ENCODE measurements at regions of chr9 and their contacts with region 1.

Region 1: DNA sequence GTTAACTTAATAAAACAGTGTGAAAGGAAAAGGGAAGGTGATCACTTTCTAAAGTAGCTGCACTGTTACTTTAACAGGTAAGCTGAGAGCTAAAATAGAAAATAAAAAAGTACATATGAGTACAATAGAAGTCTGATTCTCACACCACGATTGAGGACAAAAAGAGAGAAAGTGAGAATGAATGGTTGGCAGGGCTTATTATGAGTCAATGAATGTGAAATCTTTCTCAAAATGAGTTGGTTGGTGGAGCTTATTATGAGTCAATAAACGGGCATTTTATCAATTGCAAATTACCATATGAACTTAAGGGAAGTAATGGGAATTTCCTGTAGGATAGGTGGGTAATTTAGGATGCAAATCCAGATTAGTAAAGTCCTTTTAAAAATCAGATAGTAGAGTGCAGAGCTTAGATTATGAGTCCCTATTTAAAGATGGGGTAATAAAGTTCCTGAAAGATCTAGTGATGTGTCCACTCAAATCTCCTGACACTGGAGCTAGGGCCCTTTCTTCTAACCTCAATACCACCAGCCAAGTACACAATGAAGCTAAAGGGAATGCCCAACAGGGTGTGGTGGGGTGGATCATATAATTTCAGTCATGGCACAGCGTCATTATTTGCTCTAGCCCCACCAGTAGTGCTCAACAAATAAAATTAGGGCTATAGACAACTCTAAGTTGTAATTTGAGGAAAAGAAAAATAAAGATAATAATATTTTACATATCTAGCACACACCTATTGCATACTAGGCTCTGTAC is 21.1 kb upstream of the TLR4 start:
- DNase-seq: peak; percentile 34
- ATAC-seq: peak; percentile 88
- H3K4me3 ChIP-seq: no peak overlapping the region
- H3K27ac ChIP-seq: no peak overlapping the region
- H3K4me1 ChIP-seq: no peaks in the 10 kb centered on the region
- H3K27me3 ChIP-seq: no peaks in the 10 kb centered on the region
- CTCF ChIP-seq: no peak
- EP300 ChIP-seq: peak; percentile 69 to 80; a peak in 3 of 4 replicates
- POLR2A ChIP-seq: no peak
- RAD21 ChIP-seq: no peak

Region 2: GRCh38 chr9:117704024-117704575 is 21.0 kb after region 1 on chr9 and contains the start of gene TLR4:
- CTCF ChIA-PET with region 1: interaction called, 4 read pairs
- POLR2A ChIA-PET with region 1: interaction called, 3 read pairs
- RAD21 ChIA-PET with region 1: interaction called, 3 read pairs
- SMC1A ChIA-PET with region 1: interaction called, 5 read pairs
- in situ Hi-C with region 1: no loop called
- intact Hi-C with region 1: loop called (anchors 2 kb)
- DNase-seq: peak; percentile 45
- ATAC-seq: peak; percentile 99
- H3K4me3 ChIP-seq: no peak within 1 kb of the TSS
- H3K27ac ChIP-seq: no peak within 1 kb of the TSS
- H3K4me1 ChIP-seq: peaks cover 3% of the 10 kb centered on the region; the same call in 1 of the 2 replicates
- H3K27me3 ChIP-seq: no peaks in the 10 kb centered on the region
- CTCF ChIP-seq: no peak
- EP300 ChIP-seq: peak; percentile 15 to 54; a peak in 2 of 4 replicates
- POLR2A ChIP-seq: no peak
- RAD21 ChIP-seq: no peak
- polyA plus RNA-seq, gene TLR4: 0.03 to 0.07 TPM

Region 3: DNA sequence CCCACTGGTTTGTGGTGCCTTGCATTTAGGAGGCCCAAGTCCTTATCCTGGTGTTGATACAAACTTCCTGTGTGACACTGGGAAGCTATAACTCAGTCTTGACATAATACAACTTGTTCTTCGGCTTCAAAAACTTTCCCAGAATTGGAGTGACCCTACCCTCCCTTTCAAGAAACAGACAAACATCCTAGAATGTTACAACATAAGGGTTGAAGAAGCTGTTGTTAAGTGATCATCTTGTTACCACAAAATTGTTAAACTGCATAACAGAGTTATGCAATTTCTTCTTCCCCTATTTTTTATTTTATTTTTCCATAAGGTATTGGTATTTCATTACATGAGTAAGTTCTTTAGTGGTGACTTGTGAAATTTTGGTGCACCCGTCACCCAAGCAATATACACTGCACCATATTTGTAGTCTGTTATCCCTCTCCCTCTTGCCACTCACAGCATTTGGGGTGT is 42.3 kb after region 1 on chr9:
- CTCF ChIA-PET with region 1: interaction called, 5 read pairs
- POLR2A ChIA-PET with region 1: no interaction called
- RAD21 ChIA-PET with region 1: no interaction called
- SMC1A ChIA-PET with region 1: no interaction called
- in situ Hi-C with region 1: no loop called
- intact Hi-C with region 1: loop called (anchors 2 kb)
- DNase-seq: no peak
- ATAC-seq: no peak
- H3K4me3 ChIP-seq: no peak overlapping the region
- H3K27ac ChIP-seq: no peak overlapping the region
- H3K4me1 ChIP-seq: no peaks in the 10 kb centered on the region
- H3K27me3 ChIP-seq: no peaks in the 10 kb centered on the region
- CTCF ChIP-seq: no peak
- EP300 ChIP-seq: no peak
- POLR2A ChIP-seq: no peak
- RAD21 ChIP-seq: no peak

Region 4: DNA sequence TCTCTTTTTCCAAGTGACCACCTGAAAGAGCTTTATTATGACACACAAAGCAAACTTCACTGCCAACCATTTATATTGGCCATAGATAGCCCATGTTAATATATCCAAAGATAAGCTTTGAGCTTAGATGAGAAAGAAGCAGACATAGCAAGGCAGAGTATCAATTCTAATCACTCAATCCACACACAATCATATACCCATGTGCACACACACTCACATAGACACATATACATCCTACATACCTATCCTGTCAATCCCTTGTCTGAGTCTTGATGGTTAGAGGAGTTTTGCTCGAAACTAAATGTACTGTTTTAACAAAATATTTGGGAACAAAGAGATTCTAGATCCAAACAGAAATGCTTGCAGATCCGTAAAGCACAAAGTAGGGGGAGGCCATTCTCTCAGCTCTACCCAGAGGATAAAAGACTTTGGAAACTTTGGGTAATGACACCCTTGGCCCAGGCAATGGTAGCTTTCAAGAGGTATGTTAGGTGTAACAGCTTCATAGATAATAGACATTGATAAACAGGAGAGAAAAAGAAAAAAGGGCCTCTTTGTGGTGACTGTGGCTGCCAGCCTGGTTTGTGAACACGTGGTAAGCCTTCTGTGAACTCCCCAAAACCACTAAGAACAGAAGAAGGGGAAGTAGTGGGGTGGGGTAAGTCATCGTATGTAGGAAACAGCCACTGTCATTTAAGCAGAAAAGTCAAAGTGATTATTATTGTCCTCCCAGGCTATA is 142.6 kb after region 1 on chr9:
- CTCF ChIA-PET with region 1: no interaction called
- POLR2A ChIA-PET with region 1: no interaction called
- RAD21 ChIA-PET with region 1: no interaction called
- SMC1A ChIA-PET with region 1: no interaction called
- in situ Hi-C with region 1: no loop called
- intact Hi-C with region 1: no loop called
- DNase-seq: peak; percentile 40
- ATAC-seq: peak; percentile 99
- H3K4me3 ChIP-seq: no peak overlapping the region
- H3K27ac ChIP-seq: no peak overlapping the region
- H3K4me1 ChIP-seq: peaks cover 11% of the 10 kb centered on the region
- H3K27me3 ChIP-seq: no peaks in the 10 kb centered on the region
- CTCF ChIP-seq: no peak
- EP300 ChIP-seq: peak in 1 of 2 experiments; percentile 52; a peak in 1 of 4 replicates
- POLR2A ChIP-seq: no peak
- RAD21 ChIP-seq: no peak

Region 5: GRCh38 chr9:118009614-118010013 is 326.5 kb after region 1 on chr9:
- CTCF ChIA-PET with region 1: no interaction called
- POLR2A ChIA-PET with region 1: no interaction called
- RAD21 ChIA-PET with region 1: no interaction called
- SMC1A ChIA-PET with region 1: no interaction called
- in situ Hi-C with region 1: no loop called
- intact Hi-C with region 1: no loop called
- DNase-seq: no peak
- ATAC-seq: no peak
- H3K4me3 ChIP-seq: no peak overlapping the region
- H3K27ac ChIP-seq: no peak overlapping the region
- H3K4me1 ChIP-seq: no peaks in the 10 kb centered on the region
- H3K27me3 ChIP-seq: no peaks in the 10 kb centered on the region; a peak in 1 of 4 replicates
- CTCF ChIP-seq: no peak
- EP300 ChIP-seq: no peak
- POLR2A ChIP-seq: no peak
- RAD21 ChIP-seq: no peak